Heart right ventricle (tissue), 16 donors: ENCODE measurements at regions of chr5 and their contacts with region 1.

Region 1: GRCh38 chr5:174418928-174419796 is 305.2 kb upstream of the MSX2 start:
- DNase-seq: peak; percentile 85 to 89
- ATAC-seq: peak; percentile 81 to 96 (median 92)
- H3K4me3 ChIP-seq: peak overlapping the region in 6 of 10 donors; percentile 25 to 34 (median 30)
- H3K27ac ChIP-seq: peak overlapping the region in 1 of 10 donors; percentile 58
- H3K4me1 ChIP-seq: peaks cover 0 to 8% (median 6%) of the 10 kb centered on the region in 9 donors
- H3K27me3 ChIP-seq: peaks cover 0 to 66% (median 42%) of the 10 kb centered on the region in 7 donors
- CTCF ChIP-seq: peak; percentile 54 to 95 (median 89)

Region 2: GRCh38 chr5:174327317-174328236 is 91.6 kb before region 1 on chr5:
- intact Hi-C with region 1: loop called in 2 of 10 experiments (anchors 5 kb)
- DNase-seq: peak; percentile 42 to 63
- ATAC-seq: peak in 7 of 8 donors; percentile 20 to 70 (median 57)
- H3K4me3 ChIP-seq: no peak overlapping the region
- H3K27ac ChIP-seq: no peak overlapping the region
- H3K4me1 ChIP-seq: no peaks in the 10 kb centered on the region
- H3K27me3 ChIP-seq: peaks cover 0 to 65% (median 17%) of the 10 kb centered on the region in 7 donors
- CTCF ChIP-seq: peak in 8 of 9 donors; percentile 46 to 74 (median 69)

Region 3: GRCh38 chr5:174990909-174991308 is 571.7 kb after region 1 on chr5:
- intact Hi-C with region 1: no loop called
- DNase-seq: peak; percentile 30 to 33
- ATAC-seq: peak; percentile 64 to 91 (median 83)
- H3K4me3 ChIP-seq: no peak overlapping the region
- H3K27ac ChIP-seq: peak overlapping the region in 1 of 10 donors; percentile 40
- H3K4me1 ChIP-seq: peaks cover 0 to 26% (median 8%) of the 10 kb centered on the region in 9 donors
- H3K27me3 ChIP-seq: peaks cover 0 to 27% (median 9%) of the 10 kb centered on the region in 7 donors
- CTCF ChIP-seq: no peak

Region 4: GRCh38 chr5:175354964-175355363 is 935.8 kb after region 1 on chr5:
- intact Hi-C with region 1: no loop called
- DNase-seq: no peak
- ATAC-seq: no peak
- H3K4me3 ChIP-seq: no peak overlapping the region
- H3K27ac ChIP-seq: no peak overlapping the region
- H3K4me1 ChIP-seq: no peaks in the 10 kb centered on the region
- H3K27me3 ChIP-seq: peaks cover 0 to 53% (median 5%) of the 10 kb centered on the region in 7 donors
- CTCF ChIP-seq: no peak

Region 5: DNA sequence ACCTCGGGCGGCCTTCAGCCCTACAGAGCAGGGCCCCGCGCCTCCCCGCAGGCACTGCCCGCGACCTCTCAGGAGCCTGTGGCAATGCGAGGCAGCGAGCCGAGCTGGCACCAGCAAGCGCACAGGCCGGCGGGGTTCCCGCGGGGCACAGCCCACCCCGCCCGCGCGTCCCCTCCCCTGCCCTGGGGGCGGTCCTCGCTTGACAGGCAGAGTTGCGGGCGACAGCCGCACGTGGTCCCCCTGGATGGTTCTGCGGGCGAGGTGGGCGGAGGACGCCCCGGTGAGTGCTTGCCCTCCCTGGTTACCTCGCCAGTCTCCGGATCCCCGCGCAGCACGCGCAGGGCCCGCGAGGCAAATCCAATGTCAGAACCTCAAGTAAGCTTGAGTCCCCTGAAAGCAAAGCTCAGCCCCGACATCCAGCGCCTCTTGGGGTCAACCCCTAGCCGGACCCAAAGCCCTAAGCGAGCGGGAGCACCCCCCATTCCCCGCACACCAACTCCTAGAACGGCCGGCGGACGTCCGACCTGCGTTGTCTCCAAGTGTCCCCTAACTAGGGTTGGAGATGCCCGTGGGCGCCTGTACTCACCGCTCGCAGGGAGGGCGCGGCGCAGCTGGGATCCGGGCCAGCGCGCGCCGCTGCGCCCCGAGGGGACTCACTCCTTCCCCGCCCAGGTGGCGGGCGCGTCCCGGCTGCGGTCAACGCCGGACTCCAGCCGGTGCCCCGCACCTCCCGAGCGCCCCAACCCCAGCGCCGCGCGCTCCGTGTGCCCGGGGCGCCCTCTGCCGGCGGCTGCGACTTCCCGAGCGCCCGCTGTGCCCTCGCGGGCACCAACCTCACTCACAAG is 1025.1 kb after region 1 on chr5 and contains the start of gene DRD1:
- intact Hi-C with region 1: loop called in 1 of 10 experiments (anchors 10 kb)
- DNase-seq: peak in 1 of 2 donors; percentile 36
- ATAC-seq: peak in 6 of 8 donors; percentile 59 to 88 (median 70)
- H3K4me3 ChIP-seq: peak within 1 kb of the TSS in 8 of 10 donors; percentile 8 to 35 (median 26)
- H3K27ac ChIP-seq: no peak within 1 kb of the TSS
- H3K4me1 ChIP-seq: peaks cover 0 to 13% (median 8%) of the 10 kb centered on the region in 9 donors
- H3K27me3 ChIP-seq: peaks cover 18 to 100% (median 84%) of the 10 kb centered on the region in 7 donors
- CTCF ChIP-seq: peak; percentile 36 to 73 (median 64)
- total RNA-seq, gene DRD1: 0.06 to 0.12 (median 0.09) TPM in 3 of 10 donors, not detected in the others